ENCODE measurements at regions of chr10 and their contacts with region 1.

Region 1: GRCh38 chr10:71945819-71946474 is 18.2 kb upstream of the CHST3 start:
- DNase-seq: no peak
- H3K4me3 ChIP-seq: no peak overlapping the region
- H3K27ac ChIP-seq: no peak overlapping the region
- H3K4me1 ChIP-seq: no peaks in the 10 kb centered on the region
- H3K27me3 ChIP-seq: peaks cover 6% of the 10 kb centered on the region; the same call in 1 of the 2 replicates

Region 2: DNA sequence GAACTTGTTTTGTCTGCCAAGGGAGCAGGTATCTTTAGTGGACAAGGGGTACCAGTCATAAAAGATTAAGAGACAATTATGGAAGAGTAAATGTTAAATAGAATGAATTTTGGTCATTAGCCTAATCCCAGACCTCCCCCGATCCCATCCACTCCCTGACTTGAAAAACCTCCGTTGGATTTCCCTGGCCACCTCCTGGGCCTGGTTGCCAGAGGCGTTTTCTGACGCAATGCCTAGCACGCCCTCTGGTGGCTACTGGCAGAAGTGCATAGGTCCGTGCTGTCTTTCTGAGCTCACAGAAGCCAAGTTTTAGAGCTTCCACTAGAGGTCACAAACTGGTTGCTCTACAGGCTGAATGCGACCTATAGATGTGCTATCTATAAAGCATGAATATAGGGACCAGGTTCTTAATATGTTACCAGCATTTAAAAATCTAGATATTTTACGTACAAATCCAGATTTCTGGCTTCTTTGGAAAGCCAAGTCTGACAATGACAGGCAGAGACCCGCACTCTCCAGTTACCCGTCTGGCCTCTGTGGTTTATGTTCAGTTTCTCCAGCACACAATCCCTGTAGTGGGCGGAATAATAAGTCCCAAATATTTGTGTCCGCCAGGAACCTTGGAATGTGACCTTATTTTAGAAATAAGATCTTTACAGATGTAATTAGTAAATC is 102.6 kb after region 1 on chr10:
- in situ Hi-C with region 1: loop called (anchors 5 kb)
- DNase-seq: peak; percentile 89
- H3K4me3 ChIP-seq: no peak overlapping the region
- H3K27ac ChIP-seq: no peak overlapping the region
- H3K4me1 ChIP-seq: peaks cover 3% of the 10 kb centered on the region; the same call in 1 of the 2 replicates
- H3K27me3 ChIP-seq: no peaks in the 10 kb centered on the region

Measured in GM23248 (cell line).